Head of caudate nucleus (tissue), 42 donors: ENCODE measurements at regions of chr7 and their contacts with region 1.

Region 1: DNA sequence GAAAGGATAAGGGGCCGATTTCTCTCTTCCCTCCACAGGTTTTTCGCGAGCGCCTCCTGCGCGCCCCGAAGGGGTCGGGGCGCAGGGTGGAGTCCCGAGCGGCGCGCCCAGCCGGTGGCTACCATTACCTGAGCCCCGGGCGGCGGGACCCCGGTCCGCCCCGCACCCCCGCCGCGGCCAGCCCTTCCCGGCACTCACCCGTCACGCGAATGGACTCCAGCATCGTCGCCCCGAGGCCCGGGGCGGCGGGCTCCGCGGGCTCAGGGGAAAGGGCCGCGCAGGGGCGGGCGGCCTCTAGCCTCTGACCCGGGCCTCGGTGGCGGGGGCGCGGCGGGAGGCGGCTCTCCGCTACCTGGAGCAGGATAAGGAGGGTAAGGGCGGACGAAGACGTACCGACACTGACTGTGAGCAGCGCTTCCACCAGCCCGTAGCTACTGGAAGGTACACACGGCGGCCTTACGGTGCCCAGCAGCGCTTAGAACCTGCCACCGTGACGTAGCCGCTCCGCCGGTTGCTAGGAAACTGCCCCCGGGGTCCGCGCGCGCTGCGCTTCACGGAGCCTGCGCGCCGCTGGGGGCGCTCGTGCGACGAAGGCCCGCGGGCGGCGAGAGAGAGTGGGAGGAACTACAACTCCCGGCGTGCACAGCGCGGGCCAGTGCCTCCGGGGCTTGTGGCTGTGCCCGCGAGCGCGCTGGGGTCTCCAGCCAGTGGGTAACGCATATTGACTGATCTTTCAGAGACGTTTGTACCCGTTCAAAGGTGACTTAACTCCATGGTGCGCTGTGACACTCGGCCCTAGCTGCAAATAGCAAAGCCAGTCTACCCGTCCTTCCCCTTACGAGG is 22.7 kb upstream of the ANLN start:
- DNase-seq: peak; percentile 77 to 97 (median 92)

Region 2: DNA sequence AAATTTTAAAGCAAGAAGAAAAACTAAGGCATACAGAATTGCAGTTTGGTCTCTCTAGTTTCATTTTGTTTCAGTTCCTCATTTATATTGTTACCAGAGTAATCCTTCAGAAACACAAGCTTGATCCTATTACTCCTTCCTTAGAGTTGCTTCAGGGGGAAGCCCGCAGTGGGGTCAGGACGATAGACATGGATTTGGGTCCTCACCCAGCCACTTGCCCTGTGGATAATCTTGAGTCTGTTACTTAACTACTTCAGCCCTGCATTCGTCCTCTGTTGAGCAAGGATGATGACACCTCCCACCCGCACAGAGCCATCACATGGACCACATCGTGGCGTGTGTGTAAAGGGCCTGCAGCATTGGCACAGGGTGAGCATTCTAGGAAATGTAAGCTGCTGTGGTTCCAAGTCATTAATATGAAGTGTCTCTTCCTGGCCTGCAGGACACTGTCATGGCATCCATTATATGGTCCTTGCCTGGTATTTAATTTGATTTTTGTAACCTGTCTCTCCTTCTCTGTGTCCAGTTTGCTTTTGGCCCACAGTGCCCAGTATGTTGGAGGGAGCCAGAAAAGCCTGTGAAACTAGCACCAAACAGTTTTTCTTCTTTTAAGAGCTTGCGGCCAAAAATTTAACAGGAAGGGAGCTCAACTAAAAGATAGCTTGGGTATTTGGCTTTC is 102.7 kb before region 1 on chr7:
- intact Hi-C with region 1: no loop called
- DNase-seq: peak in 6 of 42 donors; percentile 14 to 63 (median 42)

Region 3: GRCh38 chr7:36389371-36390198 is 22.6 kb after region 1 on chr7 and contains the start of gene ANLN:
- intact Hi-C with region 1: loop called (anchors 2 kb)
- DNase-seq: peak; percentile 77 to 97 (median 92)